ENCODE measurements at regions of chr2 and their contacts with region 1.

Region 1: GRCh38 chr2:166081131-166081632 is 46.6 kb downstream of the SCN1A start:
- DNase-seq: no peak
- ATAC-seq: peak; percentile 59
- H3K4me3 ChIP-seq: peak overlapping the region in 1 of 3 experiments; percentile 1; a peak in 1 of 6 replicates
- H3K27ac ChIP-seq: peak overlapping the region; percentile 24
- H3K4me1 ChIP-seq: peaks cover 23% of the 10 kb centered on the region
- H3K27me3 ChIP-seq: no peaks in the 10 kb centered on the region
- CTCF ChIP-seq: no peak
- EP300 ChIP-seq: no peak
- POLR2A ChIP-seq: no peak
- RAD21 ChIP-seq: no peak

Region 2: DNA sequence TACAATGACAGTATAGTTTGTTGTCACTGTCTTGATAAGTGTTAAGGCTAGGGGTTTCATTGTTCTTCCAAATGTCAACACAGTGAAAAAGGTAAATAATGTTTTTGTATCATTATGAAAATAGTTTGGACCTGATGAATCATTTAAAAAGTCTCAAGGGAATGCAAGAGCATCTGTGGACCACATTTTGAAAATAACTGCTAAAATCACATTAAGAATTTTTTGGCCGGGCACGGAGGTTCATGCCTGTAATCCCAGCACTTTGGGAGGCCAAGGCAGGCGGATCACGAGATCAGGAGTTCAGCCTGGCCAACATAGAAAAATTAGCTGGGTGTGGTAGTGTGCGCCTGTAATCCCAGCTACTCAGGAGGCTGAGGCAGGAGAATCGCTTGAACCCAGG is 36.3 kb after region 1 on chr2:
- CTCF ChIA-PET with region 1: no interaction called
- POLR2A ChIA-PET with region 1: no interaction called
- in situ Hi-C with region 1: no loop called
- intact Hi-C with region 1: loop called (anchors 2 kb)
- DNase-seq: no peak
- ATAC-seq: no peak
- H3K4me3 ChIP-seq: no peak overlapping the region
- H3K27ac ChIP-seq: no peak overlapping the region
- H3K4me1 ChIP-seq: peaks cover 13% of the 10 kb centered on the region
- H3K27me3 ChIP-seq: no peaks in the 10 kb centered on the region
- CTCF ChIP-seq: no peak
- EP300 ChIP-seq: no peak
- POLR2A ChIP-seq: no peak
- RAD21 ChIP-seq: no peak

Region 3: DNA sequence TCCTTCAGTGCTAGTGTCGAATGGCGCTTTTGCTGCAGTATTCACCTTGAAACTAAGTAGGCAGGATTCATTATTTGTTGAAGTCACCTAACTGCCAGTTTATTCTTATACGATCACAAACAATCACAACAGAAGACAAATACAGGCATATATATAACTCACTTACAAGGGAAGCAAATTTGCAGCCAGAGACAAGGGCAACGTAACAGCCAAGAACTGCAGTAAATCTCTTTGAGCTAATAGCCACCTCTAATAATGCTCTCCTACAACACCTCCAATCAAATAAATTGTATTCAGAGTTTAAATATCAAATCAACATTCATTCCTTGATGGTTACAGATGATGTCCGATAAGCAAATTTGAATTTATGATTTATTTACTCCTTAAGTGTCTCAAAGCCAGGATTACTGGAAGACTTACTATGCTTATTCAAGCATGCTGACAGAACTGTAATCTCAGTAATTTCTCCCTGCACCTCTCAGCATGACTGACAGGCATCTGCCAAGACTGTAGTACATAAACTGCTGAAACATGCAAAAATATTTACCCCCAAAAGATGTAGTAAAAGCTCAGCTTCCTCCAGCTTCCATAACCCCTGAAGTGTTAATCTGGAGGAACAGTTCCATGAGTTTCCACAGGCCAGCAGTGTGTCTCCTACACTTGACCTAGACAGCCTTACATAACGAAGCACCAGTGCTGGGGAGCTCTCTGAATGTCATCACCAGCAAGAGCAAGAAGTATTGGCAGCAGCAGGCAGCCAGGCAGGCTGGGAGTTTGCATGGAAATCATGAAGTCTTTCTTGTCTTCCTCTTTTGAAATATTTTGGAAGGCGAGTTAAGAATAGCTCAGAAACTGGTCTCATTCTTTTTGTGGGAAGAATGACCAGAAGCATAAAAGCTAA is 67.6 kb after region 1 on chr2:
- CTCF ChIA-PET with region 1: no interaction called
- POLR2A ChIA-PET with region 1: no interaction called
- in situ Hi-C with region 1: no loop called
- intact Hi-C with region 1: no loop called
- DNase-seq: no peak
- ATAC-seq: peak; percentile 60
- H3K4me3 ChIP-seq: no peak overlapping the region
- H3K27ac ChIP-seq: no peak overlapping the region
- H3K4me1 ChIP-seq: peaks cover 41% of the 10 kb centered on the region
- H3K27me3 ChIP-seq: no peaks in the 10 kb centered on the region
- CTCF ChIP-seq: no peak
- EP300 ChIP-seq: no peak
- POLR2A ChIP-seq: no peak
- RAD21 ChIP-seq: no peak

Measured in HepG2 (cell line).